Esophagus muscularis mucosa (tissue), 4 donors: ENCODE measurements at regions of chr1 and their contacts with region 1.

Region 1: DNA sequence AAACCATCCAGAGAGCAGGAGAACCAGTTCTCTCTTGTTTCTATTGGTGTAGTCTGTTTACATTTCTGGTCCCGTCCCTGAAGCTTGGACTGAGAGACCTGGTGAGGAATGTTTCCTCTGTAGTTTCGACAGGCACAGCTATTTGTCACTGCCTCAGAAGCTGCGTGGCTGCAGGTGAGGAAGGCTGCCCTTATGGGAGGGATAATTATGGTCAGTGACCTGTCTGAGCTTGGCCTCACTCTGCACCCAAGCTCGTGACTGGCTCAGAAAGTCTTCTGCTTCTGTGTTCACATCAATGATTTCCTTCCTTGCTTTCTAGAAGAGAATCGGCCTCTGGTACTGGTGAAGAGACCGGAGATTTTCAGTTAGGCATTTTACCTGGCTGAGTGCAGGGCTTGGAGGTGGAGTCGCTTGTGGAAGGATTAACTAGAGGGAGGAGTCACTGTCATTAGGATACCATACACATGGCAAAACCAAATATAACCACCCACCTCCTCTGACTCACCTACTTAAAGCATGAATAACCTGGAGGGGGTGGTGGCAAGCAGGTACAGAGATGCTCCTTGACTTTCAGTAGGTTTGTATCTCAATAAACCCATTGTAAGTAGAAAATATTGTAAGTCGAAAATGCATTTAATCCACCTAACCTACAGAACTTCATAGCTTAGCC is 19.9 kb upstream of the WDR26 start:
- DNase-seq: no peak
- H3K4me3 ChIP-seq: peak overlapping the region in 1 of 4 donors; percentile 11
- H3K27ac ChIP-seq: peak overlapping the region; percentile 61 to 76 (median 68)
- H3K4me1 ChIP-seq: peaks cover 20 to 59% (median 51%) of the 10 kb centered on the region in 4 donors
- H3K27me3 ChIP-seq: no peaks in the 10 kb centered on the region
- CTCF ChIP-seq: no peak
- EP300 ChIP-seq: no peak
- POLR2A ChIP-seq: no peak

Region 2: GRCh38 chr1:224113918-224114786 is 340.4 kb before region 1 on chr1 and contains the start of gene FBXO28:
- intact Hi-C with region 1: loop called (anchors 5 kb)
- DNase-seq: peak; percentile 97
- H3K4me3 ChIP-seq: peak within 1 kb of the TSS; percentile 85 to 98 (median 92)
- H3K27ac ChIP-seq: peak within 1 kb of the TSS; percentile 90 to 96 (median 93)
- H3K4me1 ChIP-seq: peaks cover 14 to 43% (median 35%) of the 10 kb centered on the region in 4 donors
- H3K27me3 ChIP-seq: peaks cover 0 to 16% (median 0%) of the 10 kb centered on the region in 4 donors
- CTCF ChIP-seq: no peak
- EP300 ChIP-seq: no peak
- POLR2A ChIP-seq: peak; percentile 73
- total RNA-seq, gene FBXO28: 23.1 to 29.8 (median 26.3) TPM

Region 3: GRCh38 chr1:224644553-224645154 is 190.1 kb after region 1 on chr1:
- intact Hi-C with region 1: no loop called
- DNase-seq: no peak
- H3K4me3 ChIP-seq: no peak overlapping the region
- H3K27ac ChIP-seq: no peak overlapping the region
- H3K4me1 ChIP-seq: no peaks in the 10 kb centered on the region
- H3K27me3 ChIP-seq: no peaks in the 10 kb centered on the region
- CTCF ChIP-seq: peak; percentile 72 to 92 (median 75)
- EP300 ChIP-seq: no peak
- POLR2A ChIP-seq: no peak